Common myeloid progenitor, CD34-positive (primary cell): ENCODE measurements at regions of chr16 and their contacts with region 1.

Region 1: DNA sequence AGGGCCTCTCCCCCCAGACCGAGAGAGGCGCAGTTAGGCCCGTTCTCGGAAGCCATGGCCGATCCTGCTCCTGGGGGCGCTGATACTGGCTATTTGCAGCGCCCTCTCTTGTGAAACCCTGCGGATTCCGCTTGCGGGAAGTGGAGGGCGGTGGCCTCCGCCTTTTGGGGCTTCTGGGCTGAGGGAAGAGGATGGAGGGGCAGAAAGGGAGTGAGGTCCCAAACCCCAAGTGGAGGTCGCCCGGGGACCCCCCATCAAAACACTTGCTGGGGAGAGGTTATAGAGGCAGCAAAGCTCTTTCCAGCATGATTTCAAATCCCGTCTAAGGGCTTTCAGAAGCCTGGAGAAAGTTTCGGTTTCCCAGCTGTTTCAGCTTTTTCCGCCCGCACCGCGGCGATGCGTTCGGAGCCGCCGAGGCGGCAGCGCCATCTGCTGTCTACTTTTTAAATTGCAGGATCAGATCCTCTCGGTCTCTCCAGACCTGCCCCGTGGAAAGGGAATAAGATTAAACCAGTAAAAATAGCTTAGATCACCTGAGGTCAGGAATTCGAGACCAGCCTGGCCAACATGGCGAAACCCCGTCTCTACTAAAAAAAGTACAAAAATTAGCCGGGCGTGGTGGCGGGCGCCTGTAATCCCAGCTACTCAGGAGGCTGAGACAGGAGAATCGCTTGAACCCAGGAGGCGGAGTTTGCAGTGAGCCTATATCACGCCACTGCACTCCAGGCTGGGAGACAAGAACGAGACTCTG is 15.8 kb downstream of the SNX20 start:
- DNase-seq: peak; percentile 71 to 86 (median 81)
- H3K4me3 ChIP-seq: peak overlapping the region; percentile 30 to 84 (median 72)
- H3K27ac ChIP-seq: no peak overlapping the region
- H3K4me1 ChIP-seq: peaks cover 8 to 50% (median 44%) of the 10 kb centered on the region in 4 experiments
- H3K27me3 ChIP-seq: no peaks in the 10 kb centered on the region

Region 2: DNA sequence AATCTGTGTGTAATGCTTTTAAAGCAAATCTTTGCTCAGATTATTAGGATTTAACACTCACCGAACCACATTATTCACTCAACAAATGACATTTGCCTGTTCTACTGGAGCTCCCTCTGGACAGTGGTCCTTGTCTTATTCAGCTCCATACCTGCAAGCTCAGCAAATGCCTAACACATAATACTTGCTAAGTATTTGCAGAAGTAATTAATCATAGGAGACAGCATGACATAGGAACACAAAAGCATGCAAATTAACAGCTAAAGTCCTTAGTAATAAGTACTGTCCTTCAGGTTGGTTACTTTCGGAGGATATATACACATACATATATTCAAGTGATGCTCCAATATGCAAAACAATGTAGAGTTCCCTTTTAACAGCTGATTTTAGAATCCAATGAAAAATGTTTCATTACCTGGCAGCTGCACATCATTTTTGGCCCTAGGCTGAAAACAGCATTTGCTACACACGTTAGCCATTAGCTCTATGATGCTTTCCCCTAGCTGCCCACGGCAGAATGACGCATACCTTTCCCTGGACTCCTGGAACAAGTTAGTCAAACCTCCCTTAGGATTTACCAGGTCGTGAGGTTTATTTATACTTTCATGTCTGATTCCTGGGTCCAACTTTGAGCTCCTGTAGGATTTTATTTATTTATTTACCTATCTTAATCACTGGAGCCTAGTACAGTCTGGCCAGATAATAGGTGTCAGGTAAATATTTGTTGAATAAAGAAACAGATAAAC is 305.1 kb before region 1 on chr16:
- CTCF ChIA-PET with region 1: interaction called, 12 read pairs
- POLR2A ChIA-PET with region 1: no interaction called
- DNase-seq: no peak
- H3K4me3 ChIP-seq: no peak overlapping the region
- H3K27ac ChIP-seq: no peak overlapping the region
- H3K4me1 ChIP-seq: peaks cover 0 to 6% (median 0%) of the 10 kb centered on the region in 4 experiments
- H3K27me3 ChIP-seq: no peaks in the 10 kb centered on the region

Region 3: GRCh38 chr16:50530277-50531236 is 134.7 kb before region 1 on chr16:
- CTCF ChIA-PET with region 1: no interaction called
- POLR2A ChIA-PET with region 1: no interaction called
- DNase-seq: no peak
- H3K4me3 ChIP-seq: no peak overlapping the region
- H3K27ac ChIP-seq: no peak overlapping the region
- H3K4me1 ChIP-seq: no peaks in the 10 kb centered on the region
- H3K27me3 ChIP-seq: peaks cover 2 to 9% (median 3%) of the 10 kb centered on the region in 5 experiments

Region 4: GRCh38 chr16:50642349-50642748 is 23.0 kb before region 1 on chr16:
- CTCF ChIA-PET with region 1: interaction called, 23 read pairs
- POLR2A ChIA-PET with region 1: no interaction called
- DNase-seq: no peak
- H3K4me3 ChIP-seq: no peak overlapping the region
- H3K27ac ChIP-seq: no peak overlapping the region
- H3K4me1 ChIP-seq: peaks cover 0 to 13% (median 6%) of the 10 kb centered on the region in 4 experiments
- H3K27me3 ChIP-seq: peaks cover 0 to 1% (median 0%) of the 10 kb centered on the region in 5 experiments

Region 5: GRCh38 chr16:50696575-50697420 is 31.5 kb after region 1 on chr16:
- CTCF ChIA-PET with region 1: interaction called, 14 read pairs
- POLR2A ChIA-PET with region 1: no interaction called
- DNase-seq: peak in 2 of 3 donors; percentile 64 to 70
- H3K4me3 ChIP-seq: no peak overlapping the region
- H3K27ac ChIP-seq: peak overlapping the region in 1 of 2 experiments; percentile 39
- H3K4me1 ChIP-seq: peaks cover 2 to 54% (median 43%) of the 10 kb centered on the region in 4 experiments
- H3K27me3 ChIP-seq: no peaks in the 10 kb centered on the region

Region 6: GRCh38 chr16:50709053-50709684 is 43.9 kb after region 1 on chr16:
- CTCF ChIA-PET with region 1: interaction called, 12 read pairs
- POLR2A ChIA-PET with region 1: no interaction called
- DNase-seq: peak; percentile 58 to 87 (median 87)
- H3K4me3 ChIP-seq: peak overlapping the region in 4 of 7 experiments; percentile 8 to 37 (median 23)
- H3K27ac ChIP-seq: no peak overlapping the region
- H3K4me1 ChIP-seq: peaks cover 32 to 70% (median 60%) of the 10 kb centered on the region in 4 experiments
- H3K27me3 ChIP-seq: no peaks in the 10 kb centered on the region

Region 7: GRCh38 chr16:50747207-50747956 is 82.1 kb after region 1 on chr16:
- CTCF ChIA-PET with region 1: interaction called, 224 read pairs
- POLR2A ChIA-PET with region 1: interaction called, 9 read pairs
- DNase-seq: peak; percentile 68 to 81 (median 79)
- H3K4me3 ChIP-seq: peak overlapping the region in 5 of 7 experiments; percentile 5 to 61 (median 37)
- H3K27ac ChIP-seq: peak overlapping the region in 1 of 2 experiments; percentile 68
- H3K4me1 ChIP-seq: peaks cover 41 to 66% (median 48%) of the 10 kb centered on the region in 4 experiments
- H3K27me3 ChIP-seq: no peaks in the 10 kb centered on the region